ENCODE measurements at regions of chr3 and their contacts with region 1.

Region 1: DNA sequence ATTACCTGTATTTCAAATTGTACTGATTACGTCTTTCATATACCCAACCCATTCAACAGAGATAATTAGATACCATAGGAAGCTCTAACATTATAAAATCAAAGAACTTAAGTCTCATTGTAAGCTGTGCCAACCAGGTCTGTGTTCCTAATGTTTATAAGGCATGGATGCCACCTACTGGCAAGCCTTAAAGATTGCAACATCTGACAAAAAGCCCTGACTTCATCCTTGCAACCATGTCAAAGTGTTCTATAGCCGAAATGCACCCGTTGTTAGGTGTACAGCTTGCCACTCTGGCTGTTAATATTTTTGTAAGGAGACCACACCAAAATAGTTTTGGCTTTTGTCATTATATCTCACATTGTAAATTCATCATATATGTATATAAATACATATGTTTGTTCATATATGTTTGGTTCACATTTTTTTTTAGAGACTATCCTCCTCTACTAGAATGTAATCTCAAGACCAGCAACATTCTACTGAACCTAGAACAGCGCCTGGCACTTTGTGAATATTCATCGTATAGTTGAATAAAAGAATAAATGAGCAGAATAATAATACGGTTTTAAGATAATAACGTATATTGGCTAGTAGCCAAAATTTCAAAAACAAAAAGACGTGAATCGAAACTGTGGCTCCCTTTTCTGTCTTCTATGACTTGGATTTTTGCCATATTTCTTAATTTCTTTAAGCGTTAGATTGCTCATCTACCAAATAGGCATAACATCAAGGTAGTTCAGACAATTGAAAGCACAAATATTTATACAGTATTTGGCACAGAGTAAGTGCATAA is 258.1 kb downstream of the TBL1XR1 start:
- DNase-seq: no peak

Region 2: DNA sequence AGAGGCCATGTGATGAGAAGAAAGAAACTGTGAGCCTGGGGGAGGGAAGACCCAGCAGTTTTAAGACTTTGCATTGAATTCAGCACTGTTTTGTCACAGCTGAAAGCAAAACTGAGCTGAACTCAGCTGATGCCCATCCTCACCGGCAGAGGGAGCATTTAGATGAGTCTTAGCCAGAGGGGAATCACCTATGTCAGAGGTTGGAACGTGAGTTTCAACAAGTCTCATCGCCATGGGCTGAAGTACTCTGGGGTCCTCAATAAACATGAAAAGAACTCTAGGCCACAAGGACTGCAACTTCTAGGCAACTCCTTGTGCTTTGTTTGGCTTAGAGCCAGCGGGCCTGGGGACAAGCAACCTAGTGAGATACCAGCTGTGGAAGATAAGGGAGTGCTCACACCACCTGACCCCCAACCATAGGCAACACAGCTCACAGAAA is 66.4 kb before region 1 on chr3:
- intact Hi-C with region 1: loop called (anchors 5 kb)
- DNase-seq: no peak

Measured in cardiac septum (tissue), 1 donor.